MCF 10A (cell line): ENCODE measurements at regions of chr12 and their contacts with region 1.

Region 1: GRCh38 chr12:98490501-98491453 is 24.6 kb upstream of the TMPO start:
- DNase-seq: peak; percentile 86
- H3K4me3 Mint-ChIP-seq: peak overlapping the region; percentile 57
- H3K27ac Mint-ChIP-seq: peak overlapping the region; percentile 54
- H3K4me1 Mint-ChIP-seq: no peaks in the 10 kb centered on the region
- H3K27me3 Mint-ChIP-seq: no peaks in the 10 kb centered on the region
- CTCF ChIP-seq: peak; percentile 81

Region 2: GRCh38 chr12:98424726-98425401 is 65.9 kb before region 1 on chr12:
- CTCF ChIA-PET with region 1: interaction called, 16 read pairs
- POLR2A ChIA-PET with region 1: interaction called, 9 read pairs
- intact Hi-C with region 1: loop called (anchors 1 kb)
- DNase-seq: peak; percentile 95
- H3K4me3 Mint-ChIP-seq: no peak overlapping the region
- H3K27ac Mint-ChIP-seq: no peak overlapping the region
- H3K4me1 Mint-ChIP-seq: peaks cover 16% of the 10 kb centered on the region
- H3K27me3 Mint-ChIP-seq: no peaks in the 10 kb centered on the region
- CTCF ChIP-seq: peak; percentile 74

Region 3: GRCh38 chr12:98464190-98464589 is 26.6 kb before region 1 on chr12:
- CTCF ChIA-PET with region 1: interaction called, 10 read pairs
- POLR2A ChIA-PET with region 1: interaction called, 4 read pairs
- intact Hi-C with region 1: no loop called
- DNase-seq: peak; percentile 84
- H3K4me3 Mint-ChIP-seq: no peak overlapping the region
- H3K27ac Mint-ChIP-seq: no peak overlapping the region
- H3K4me1 Mint-ChIP-seq: peaks cover 16% of the 10 kb centered on the region
- H3K27me3 Mint-ChIP-seq: no peaks in the 10 kb centered on the region
- CTCF ChIP-seq: no peak

Region 4: DNA sequence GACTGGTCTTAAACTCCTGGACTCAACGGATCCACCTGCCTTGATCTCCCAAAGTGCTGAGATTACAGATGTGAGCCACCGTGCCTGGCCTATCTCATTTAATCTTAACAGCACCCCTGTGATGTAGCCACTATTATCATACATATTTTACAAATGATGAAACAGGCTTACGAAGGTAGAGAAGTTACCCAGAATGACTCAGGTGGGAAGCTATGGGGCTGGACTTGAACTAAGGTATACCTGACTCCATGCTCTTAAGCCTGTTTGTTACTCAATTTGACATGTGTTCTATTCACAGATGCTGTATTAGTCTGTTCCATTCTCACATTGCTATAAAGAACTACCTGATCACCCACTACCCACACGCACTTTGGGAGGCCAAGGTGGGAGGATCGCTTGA is 12.2 kb before region 1 on chr12:
- CTCF ChIA-PET with region 1: interaction called, 31 read pairs
- POLR2A ChIA-PET with region 1: interaction called, 8 read pairs
- intact Hi-C with region 1: no loop called
- DNase-seq: no peak
- H3K4me3 Mint-ChIP-seq: no peak overlapping the region
- H3K27ac Mint-ChIP-seq: no peak overlapping the region
- H3K4me1 Mint-ChIP-seq: peaks cover 12% of the 10 kb centered on the region
- H3K27me3 Mint-ChIP-seq: no peaks in the 10 kb centered on the region
- CTCF ChIP-seq: no peak

Region 5: GRCh38 chr12:98509063-98509462 is 18.3 kb after region 1 on chr12:
- CTCF ChIA-PET with region 1: interaction called, 49 read pairs
- POLR2A ChIA-PET with region 1: interaction called, 61 read pairs
- intact Hi-C with region 1: no loop called
- DNase-seq: no peak
- H3K4me3 Mint-ChIP-seq: no peak overlapping the region
- H3K27ac Mint-ChIP-seq: no peak overlapping the region
- H3K4me1 Mint-ChIP-seq: peaks cover 14% of the 10 kb centered on the region
- H3K27me3 Mint-ChIP-seq: no peaks in the 10 kb centered on the region
- CTCF ChIP-seq: no peak

Region 6: DNA sequence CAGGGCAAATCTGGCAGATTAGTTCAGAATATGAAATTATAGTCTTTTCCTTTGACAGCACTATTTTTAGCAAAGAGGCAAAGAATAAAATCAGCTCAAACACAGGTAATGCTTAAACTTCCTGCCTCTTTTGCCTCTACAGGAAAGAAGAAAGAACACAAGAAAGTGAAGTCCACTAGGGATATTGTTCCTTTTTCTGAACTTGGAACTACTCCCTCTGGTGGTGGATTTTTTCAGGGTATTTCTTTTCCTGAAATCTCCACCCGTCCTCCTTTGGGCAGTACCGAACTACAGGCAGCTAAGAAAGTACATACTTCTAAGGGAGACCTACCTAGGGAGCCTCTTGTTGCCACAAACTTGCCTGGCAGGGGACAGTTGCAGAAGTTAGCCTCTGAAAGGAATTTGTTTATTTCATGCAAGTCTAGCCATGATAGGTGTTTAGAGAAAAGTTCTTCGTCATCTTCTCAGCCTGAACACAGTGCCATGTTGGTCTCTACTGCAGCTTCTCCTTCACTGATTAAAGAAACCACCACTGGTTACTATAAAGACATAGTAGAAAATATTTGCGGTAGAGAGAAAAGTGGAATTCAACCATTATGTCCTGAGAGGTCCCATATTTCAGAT is 42.0 kb after region 1 on chr12:
- CTCF ChIA-PET with region 1: interaction called, 9 read pairs
- POLR2A ChIA-PET with region 1: interaction called, 5 read pairs
- intact Hi-C with region 1: loop called (anchors 1 kb)
- DNase-seq: peak; percentile 70
- H3K4me3 Mint-ChIP-seq: no peak overlapping the region
- H3K27ac Mint-ChIP-seq: no peak overlapping the region
- H3K4me1 Mint-ChIP-seq: no peaks in the 10 kb centered on the region
- H3K27me3 Mint-ChIP-seq: no peaks in the 10 kb centered on the region
- CTCF ChIP-seq: peak; percentile 62